ENCODE measurements at regions of chr7 and their contacts with region 1.

Region 1: DNA sequence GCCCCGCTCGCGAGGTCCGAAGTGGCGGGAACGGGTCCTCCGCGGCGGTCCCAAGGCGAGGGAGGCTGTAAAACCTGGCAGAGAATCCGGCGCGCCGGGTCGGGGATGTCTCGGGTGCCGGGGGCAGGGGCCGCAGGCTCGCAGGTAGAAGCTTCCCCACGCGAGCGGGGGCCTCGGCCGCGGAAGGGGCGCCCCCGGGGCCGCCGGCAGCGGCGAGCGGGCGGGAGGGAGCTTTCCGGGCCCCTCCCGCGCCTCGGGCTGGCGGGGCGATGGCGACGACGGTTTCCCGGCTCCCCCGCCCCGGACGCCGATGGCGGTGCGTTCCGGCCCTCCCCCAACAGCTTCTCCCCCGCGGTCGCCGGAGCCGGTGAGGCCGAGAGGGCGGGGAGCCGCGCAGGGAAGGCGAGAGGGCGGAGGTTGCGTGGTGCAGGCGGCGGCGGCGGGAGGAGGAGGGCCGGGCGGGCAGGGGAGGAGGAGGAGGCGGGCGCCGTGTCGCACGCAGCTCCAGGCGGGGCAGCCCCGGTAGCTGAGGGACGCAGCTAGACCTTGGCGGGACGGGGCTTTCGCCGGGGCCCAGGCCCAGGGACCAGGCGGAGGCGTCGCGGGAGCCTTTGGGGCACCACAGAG is at the start of gene CUL1:
- DNase-seq: peak; percentile 84 to 89 (median 85)
- H3K4me3 ChIP-seq: peak within 1 kb of the TSS; percentile 67 to 89
- H3K4me3 Mint-ChIP-seq: peak within 1 kb of the TSS; percentile 88 to 95 (median 91)
- H3K27ac ChIP-seq: peak within 1 kb of the TSS; percentile 89
- H3K27ac Mint-ChIP-seq: peak within 1 kb of the TSS; percentile 91 to 96 (median 94)
- H3K4me1 ChIP-seq: peaks cover 45% of the 10 kb centered on the region
- H3K4me1 Mint-ChIP-seq: peaks cover 41 to 59% (median 47%) of the 10 kb centered on the region in 4 donors
- H3K27me3 ChIP-seq: no peaks in the 10 kb centered on the region
- H3K27me3 Mint-ChIP-seq: no peaks in the 10 kb centered on the region
- total RNA-seq, gene CUL1: 65.6 to 66.8 TPM

Region 2: GRCh38 chr7:148575640-148576411 is 122.7 kb before region 1 on chr7:
- CTCF ChIA-PET with region 1: interaction called, 9 read pairs
- POLR2A ChIA-PET with region 1: interaction called, 8 read pairs
- intact Hi-C with region 1: loop called (anchors 2 kb)
- DNase-seq: peak; percentile 48 to 67 (median 57)
- H3K4me3 ChIP-seq: no peak overlapping the region
- H3K4me3 Mint-ChIP-seq: no peak overlapping the region
- H3K27ac ChIP-seq: no peak overlapping the region
- H3K27ac Mint-ChIP-seq: no peak overlapping the region
- H3K4me1 ChIP-seq: no peaks in the 10 kb centered on the region
- H3K4me1 Mint-ChIP-seq: peaks cover 0 to 2% (median 0%) of the 10 kb centered on the region in 4 donors
- H3K27me3 ChIP-seq: no peaks in the 10 kb centered on the region
- H3K27me3 Mint-ChIP-seq: peaks cover 0 to 4% of the 10 kb centered on the region in 2 donors

Region 3: GRCh38 chr7:148738737-148739535 is 40.4 kb after region 1 on chr7:
- CTCF ChIA-PET with region 1: no interaction called
- POLR2A ChIA-PET with region 1: no interaction called
- intact Hi-C with region 1: loop called (anchors 5 kb)
- DNase-seq: no peak
- H3K4me3 ChIP-seq: no peak overlapping the region
- H3K4me3 Mint-ChIP-seq: no peak overlapping the region
- H3K27ac ChIP-seq: no peak overlapping the region
- H3K27ac Mint-ChIP-seq: peak overlapping the region in 1 of 7 donors; percentile 6
- H3K4me1 ChIP-seq: no peaks in the 10 kb centered on the region
- H3K4me1 Mint-ChIP-seq: peaks cover 18 to 20% (median 19%) of the 10 kb centered on the region in 4 donors
- H3K27me3 ChIP-seq: no peaks in the 10 kb centered on the region
- H3K27me3 Mint-ChIP-seq: no peaks in the 10 kb centered on the region

Region 4: DNA sequence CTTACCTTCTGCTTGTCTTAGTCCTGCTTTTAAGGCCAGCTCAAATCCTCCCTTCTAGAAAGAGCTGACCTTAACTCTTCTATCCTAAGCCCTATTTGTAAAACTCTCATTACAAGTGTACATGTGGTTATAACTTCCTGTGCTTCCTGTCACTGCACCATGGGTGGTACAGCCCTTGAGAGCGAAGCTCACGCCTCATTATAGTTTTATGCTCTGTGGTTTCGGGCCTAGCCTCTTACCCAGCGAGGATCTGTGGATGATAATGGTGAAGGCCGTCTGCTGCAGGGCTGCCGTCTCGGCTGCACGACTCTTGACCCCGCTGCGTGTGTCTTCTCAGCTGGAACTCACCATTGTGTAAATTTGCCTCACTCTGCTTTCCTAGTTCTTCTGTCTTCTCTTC is 74.8 kb after region 1 on chr7:
- CTCF ChIA-PET with region 1: interaction called, 5 read pairs
- POLR2A ChIA-PET with region 1: interaction called, 26 read pairs
- intact Hi-C with region 1: loop called (anchors 2 kb)
- DNase-seq: peak; percentile 38 to 57 (median 43)
- H3K4me3 ChIP-seq: no peak overlapping the region
- H3K4me3 Mint-ChIP-seq: peak overlapping the region in 7 of 8 donors; percentile 15 to 77 (median 67)
- H3K27ac ChIP-seq: peak overlapping the region; percentile 52
- H3K27ac Mint-ChIP-seq: peak overlapping the region; percentile 55 to 88 (median 77)
- H3K4me1 ChIP-seq: peaks cover 24% of the 10 kb centered on the region
- H3K4me1 Mint-ChIP-seq: peaks cover 25 to 46% (median 33%) of the 10 kb centered on the region in 4 donors
- H3K27me3 ChIP-seq: no peaks in the 10 kb centered on the region
- H3K27me3 Mint-ChIP-seq: no peaks in the 10 kb centered on the region

Region 5: GRCh38 chr7:148940702-148941597 is 242.4 kb after region 1 on chr7:
- CTCF ChIA-PET with region 1: no interaction called
- POLR2A ChIA-PET with region 1: interaction called, 16 read pairs
- intact Hi-C with region 1: no loop called
- DNase-seq: peak; percentile 75 to 84 (median 80)
- H3K4me3 ChIP-seq: peak overlapping the region; percentile 54 to 75
- H3K4me3 Mint-ChIP-seq: peak overlapping the region; percentile 93 to 97 (median 96)
- H3K27ac ChIP-seq: peak overlapping the region; percentile 90
- H3K27ac Mint-ChIP-seq: peak overlapping the region; percentile 91 to 99 (median 98)
- H3K4me1 ChIP-seq: peaks cover 21% of the 10 kb centered on the region
- H3K4me1 Mint-ChIP-seq: peaks cover 6 to 25% (median 13%) of the 10 kb centered on the region in 4 donors
- H3K27me3 ChIP-seq: no peaks in the 10 kb centered on the region
- H3K27me3 Mint-ChIP-seq: no peaks in the 10 kb centered on the region